ENCODE measurements at regions of chr1 and their contacts with region 1.

Region 1: DNA sequence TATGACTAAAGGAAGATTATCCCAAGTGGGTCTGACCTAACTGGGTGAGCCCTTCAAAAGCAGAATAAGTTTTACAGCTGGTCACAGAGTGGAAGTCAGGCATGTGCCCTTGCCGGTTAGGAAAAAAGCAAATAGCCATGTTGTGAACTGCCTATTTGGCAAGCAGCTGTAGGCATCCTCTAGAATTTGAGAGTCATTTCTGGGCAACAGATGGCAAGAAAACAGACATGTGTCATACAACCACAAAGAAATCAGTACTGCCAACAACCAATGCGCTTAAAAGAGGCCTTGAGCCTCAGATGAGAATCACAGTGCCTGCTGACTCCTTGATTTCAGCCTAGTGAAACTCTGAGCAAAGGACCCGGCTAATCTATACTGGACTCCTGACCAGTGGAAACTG is 26.8 kb downstream of the LRRC53 start:
- DNase-seq: no peak
- ATAC-seq: no peak
- H3K4me3 ChIP-seq: no peak overlapping the region
- H3K27ac ChIP-seq: no peak overlapping the region
- H3K4me1 ChIP-seq: no peaks in the 10 kb centered on the region
- H3K27me3 ChIP-seq: no peaks in the 10 kb centered on the region; a peak in 1 of 4 replicates
- CTCF ChIP-seq: no peak
- EP300 ChIP-seq: no peak
- POLR2A ChIP-seq: no peak
- RAD21 ChIP-seq: no peak

Region 2: GRCh38 chr1:74432325-74432724 is 53.3 kb before region 1 on chr1:
- CTCF ChIA-PET with region 1: no interaction called
- POLR2A ChIA-PET with region 1: no interaction called
- RAD21 ChIA-PET with region 1: no interaction called
- SMC1A ChIA-PET with region 1: no interaction called
- in situ Hi-C with region 1: no loop called
- intact Hi-C with region 1: no loop called
- DNase-seq: no peak
- ATAC-seq: no peak
- H3K4me3 ChIP-seq: no peak overlapping the region
- H3K27ac ChIP-seq: no peak overlapping the region
- H3K4me1 ChIP-seq: no peaks in the 10 kb centered on the region
- H3K27me3 ChIP-seq: no peaks in the 10 kb centered on the region
- CTCF ChIP-seq: no peak
- EP300 ChIP-seq: no peak
- POLR2A ChIP-seq: no peak
- RAD21 ChIP-seq: no peak

Region 3: DNA sequence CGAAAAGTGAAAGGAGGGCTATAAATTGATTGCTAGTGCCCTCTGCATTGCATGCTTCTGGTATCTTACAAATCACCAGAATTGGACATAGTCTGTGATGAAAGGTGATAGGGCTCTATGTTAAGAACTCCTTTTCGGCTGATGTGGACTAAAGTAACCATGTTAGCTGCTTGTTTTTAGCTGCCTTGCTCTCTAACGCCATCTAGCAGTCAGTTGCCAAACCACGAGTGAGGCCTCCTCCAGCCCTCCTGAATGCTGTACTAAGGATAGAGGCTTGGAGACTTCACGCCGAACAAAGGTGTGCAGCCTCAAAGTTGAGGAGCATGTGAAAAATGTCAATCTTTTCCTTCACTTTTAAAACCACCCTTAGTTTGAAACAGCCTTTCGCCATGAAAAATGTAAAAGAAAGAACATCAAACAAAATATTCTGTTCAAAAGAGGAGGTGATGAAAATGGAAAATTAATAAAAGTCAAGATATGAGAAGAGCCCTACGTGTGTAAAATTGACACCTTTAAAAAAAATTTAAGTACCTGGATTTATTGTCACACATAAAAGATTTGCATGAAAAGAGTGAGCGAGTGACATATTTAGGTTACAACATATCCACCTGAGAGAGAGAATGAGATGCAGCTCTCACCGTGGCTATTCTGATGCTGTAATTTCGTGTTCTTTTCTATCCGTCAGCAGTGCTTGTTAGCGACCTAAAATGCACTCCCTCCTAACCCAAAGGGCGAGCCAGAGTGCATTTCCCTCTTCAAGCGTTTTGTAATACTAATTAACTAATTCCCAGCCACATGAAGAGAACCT is 18.7 kb after region 1 on chr1:
- CTCF ChIA-PET with region 1: interaction called, 13 read pairs
- POLR2A ChIA-PET with region 1: no interaction called
- RAD21 ChIA-PET with region 1: no interaction called
- SMC1A ChIA-PET with region 1: interaction called, 9 read pairs
- in situ Hi-C with region 1: no loop called
- intact Hi-C with region 1: no loop called
- DNase-seq: peak; percentile 33
- ATAC-seq: peak; percentile 99
- H3K4me3 ChIP-seq: no peak overlapping the region
- H3K27ac ChIP-seq: no peak overlapping the region
- H3K4me1 ChIP-seq: no peaks in the 10 kb centered on the region
- H3K27me3 ChIP-seq: no peaks in the 10 kb centered on the region
- CTCF ChIP-seq: peak; percentile 82 to 89 (median 88)
- EP300 ChIP-seq: no peak
- POLR2A ChIP-seq: no peak
- RAD21 ChIP-seq: peak; percentile 74

Measured in GM12878 (cell line).